HCT116 (cell line): ENCODE measurements at regions of chr7 and their contacts with region 1.

Region 1: GRCh38 chr7:154503962-154504550 is 451.9 kb downstream of the DPP6 start:
- DNase-seq: peak; percentile 22
- ATAC-seq: no peak
- H3K4me3 ChIP-seq: no peak overlapping the region
- H3K27ac ChIP-seq: no peak overlapping the region
- H3K4me1 ChIP-seq: no peaks in the 10 kb centered on the region
- H3K27me3 ChIP-seq: no peaks in the 10 kb centered on the region
- CTCF ChIP-seq: peak; percentile 25 to 70 (median 29); a peak in 4 of 6 replicates
- POLR2A ChIP-seq: no peak
- RAD21 ChIP-seq: peak; percentile 49

Region 2: DNA sequence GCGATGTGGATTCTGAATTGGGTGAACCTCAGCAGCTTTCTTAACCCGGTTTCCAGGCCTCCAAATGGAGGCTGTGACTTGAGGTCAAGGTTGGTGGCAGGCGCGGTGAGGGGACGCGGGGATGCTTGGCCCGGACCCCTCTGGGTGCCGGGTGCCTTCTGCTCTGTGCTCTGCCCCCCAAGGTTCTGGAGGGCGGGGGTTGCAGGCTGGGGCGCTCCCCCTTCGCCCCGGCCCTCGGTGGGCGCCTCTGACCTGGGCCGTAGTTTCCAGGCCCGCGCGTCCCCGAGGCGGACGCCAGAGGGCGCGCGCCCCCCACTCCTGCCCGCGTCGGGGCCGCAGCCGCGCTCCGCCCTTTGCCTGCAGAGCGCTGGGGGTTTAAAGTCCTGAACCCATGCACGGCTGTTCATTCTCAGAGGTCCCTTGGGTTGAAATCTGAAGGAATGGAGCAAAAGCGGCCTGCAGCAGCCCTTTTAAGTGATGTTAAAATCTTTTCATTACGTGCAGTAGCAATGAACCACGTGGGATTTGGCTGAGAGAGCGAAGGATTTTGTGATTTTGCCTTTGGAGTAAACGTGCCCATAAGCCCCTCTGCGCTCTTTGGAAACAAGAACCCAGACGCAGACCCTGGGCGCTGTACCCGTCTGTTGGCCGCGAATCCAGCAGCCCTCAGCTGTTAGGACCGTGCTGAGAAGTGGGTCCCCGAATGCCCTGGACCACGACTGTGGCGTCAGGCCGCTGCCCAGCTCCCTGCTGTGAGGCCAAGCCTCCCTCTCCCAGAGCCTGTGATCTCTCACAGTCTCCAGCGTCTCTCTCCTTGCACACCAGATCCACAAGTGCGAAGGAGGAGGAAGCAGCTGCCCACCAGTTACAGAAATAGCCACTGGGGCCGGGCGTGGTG is 1609.5 kb before region 1 on chr7:
- CTCF ChIA-PET with region 1: no interaction called
- POLR2A ChIA-PET with region 1: no interaction called
- RAD21 ChIA-PET with region 1: no interaction called
- intact Hi-C with region 1: loop called (anchors 10 kb)
- DNase-seq: no peak
- ATAC-seq: peak; percentile 94
- H3K4me3 ChIP-seq: no peak overlapping the region
- H3K27ac ChIP-seq: no peak overlapping the region
- H3K4me1 ChIP-seq: no peaks in the 10 kb centered on the region
- H3K27me3 ChIP-seq: no peaks in the 10 kb centered on the region
- CTCF ChIP-seq: peak; percentile 43 to 79 (median 77); a peak in 5 of 6 replicates
- POLR2A ChIP-seq: no peak
- RAD21 ChIP-seq: peak; percentile 80

Region 3: GRCh38 chr7:154693661-154694060 is 189.6 kb after region 1 on chr7:
- CTCF ChIA-PET with region 1: no interaction called
- POLR2A ChIA-PET with region 1: no interaction called
- RAD21 ChIA-PET with region 1: no interaction called
- intact Hi-C with region 1: no loop called
- DNase-seq: no peak
- ATAC-seq: no peak
- H3K4me3 ChIP-seq: no peak overlapping the region
- H3K27ac ChIP-seq: no peak overlapping the region
- H3K4me1 ChIP-seq: no peaks in the 10 kb centered on the region
- H3K27me3 ChIP-seq: no peaks in the 10 kb centered on the region
- CTCF ChIP-seq: no peak
- POLR2A ChIP-seq: no peak
- RAD21 ChIP-seq: no peak